Activated T-helper 1 cell treated with anti-CD3 and anti-CD28 coated beads, Interleukin-12 subunit alpha, Interleukin-12 subunit beta, Interleukin-2, Interleukin-4 antibody, amounts not matched to agents 30 ng/mL and 10 ng/mL and 1 ng/mL, durations not matched to agents 14 hours and 24 hours and 36 hours (primary cell): ENCODE measurements at regions of chr2 and their contacts with region 1.

Region 1: DNA sequence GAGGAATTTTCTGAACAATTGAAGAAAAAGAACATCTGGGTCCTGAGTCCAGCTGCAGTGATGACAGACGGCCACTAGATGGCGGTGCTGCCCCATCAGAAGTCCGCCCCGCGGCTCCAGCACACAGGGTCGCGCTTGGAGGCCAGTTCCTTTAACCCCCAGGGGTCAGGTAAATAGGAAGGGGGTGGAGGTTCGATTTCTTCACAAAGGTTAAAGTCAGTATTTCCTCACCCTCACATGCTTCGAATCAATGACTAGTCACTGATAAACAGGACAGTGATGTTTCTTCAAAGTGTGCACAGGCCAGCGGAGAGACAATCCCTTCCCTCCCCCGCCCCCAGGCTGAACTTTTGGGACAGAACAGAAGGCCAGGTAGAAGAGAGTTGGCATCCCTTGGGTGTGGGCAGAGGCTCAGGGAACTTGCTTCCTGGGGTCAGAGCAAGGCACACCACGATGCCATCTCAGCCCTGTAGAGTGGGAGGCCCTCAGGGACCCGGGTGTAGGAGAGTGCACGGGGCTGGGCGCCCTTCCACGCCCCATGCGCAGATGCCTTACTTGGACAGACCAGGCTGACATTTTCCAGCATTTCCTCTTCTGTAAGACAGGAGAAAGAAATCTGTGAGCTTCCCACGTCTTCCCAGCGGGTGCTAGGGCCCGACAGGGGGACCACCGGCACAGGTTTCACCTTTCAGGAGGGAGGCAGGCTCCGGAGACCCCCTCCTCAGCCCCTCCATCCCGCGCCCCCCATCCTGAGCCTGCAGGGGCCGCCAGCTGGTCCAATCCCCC is 722 bp downstream of the APOB start:
- DNase-seq: peak; percentile 11
- H3K4me3 Mint-ChIP-seq: no peak overlapping the region
- H3K27ac Mint-ChIP-seq: no peak overlapping the region
- H3K4me1 Mint-ChIP-seq: no peaks in the 10 kb centered on the region
- H3K27me3 Mint-ChIP-seq: peaks cover 24% of the 10 kb centered on the region

Region 2: GRCh38 chr2:21118302-21118920 is 75.3 kb after region 1 on chr2:
- intact Hi-C with region 1: loop called (anchors 1 kb)
- DNase-seq: no peak
- H3K4me3 Mint-ChIP-seq: no peak overlapping the region
- H3K27ac Mint-ChIP-seq: no peak overlapping the region
- H3K4me1 Mint-ChIP-seq: no peaks in the 10 kb centered on the region
- H3K27me3 Mint-ChIP-seq: peaks cover 2% of the 10 kb centered on the region

Region 3: GRCh38 chr2:21317131-21317530 is 274.0 kb after region 1 on chr2:
- intact Hi-C with region 1: loop called (anchors 1 kb)
- DNase-seq: no peak
- H3K4me3 Mint-ChIP-seq: no peak overlapping the region
- H3K27ac Mint-ChIP-seq: no peak overlapping the region
- H3K4me1 Mint-ChIP-seq: no peaks in the 10 kb centered on the region
- H3K27me3 Mint-ChIP-seq: no peaks in the 10 kb centered on the region